Heart left ventricle (tissue), 16 donors: ENCODE measurements at regions of chr2 and their contacts with region 1.

Region 1: DNA sequence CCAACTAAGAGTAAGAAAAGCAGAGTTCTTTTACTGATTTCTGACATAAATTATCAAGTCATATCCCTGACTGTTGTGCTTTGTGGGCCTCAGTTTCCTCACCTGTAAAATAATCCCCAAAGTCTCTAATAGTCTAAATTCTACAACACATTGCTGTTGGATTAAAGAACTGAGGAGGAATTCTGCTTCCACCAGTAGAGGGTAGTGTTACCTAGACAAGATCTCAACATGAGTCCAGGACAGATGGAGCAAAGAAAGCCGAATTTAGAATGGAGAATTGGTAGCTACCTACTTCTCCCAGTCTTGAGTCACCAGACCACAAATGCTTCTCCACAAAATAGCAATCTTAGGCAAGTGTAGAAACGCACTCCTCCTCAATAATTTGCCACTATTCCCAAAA is 462.5 kb upstream of the FSHR start:
- DNase-seq: no peak
- ATAC-seq: peak in 1 of 4 donors; percentile 36
- H3K4me3 ChIP-seq: no peak overlapping the region
- H3K27ac ChIP-seq: no peak overlapping the region
- H3K4me1 ChIP-seq: no peaks in the 10 kb centered on the region
- H3K27me3 ChIP-seq: no peaks in the 10 kb centered on the region
- CTCF ChIP-seq: peak in 10 of 12 donors; percentile 16 to 57 (median 42)
- POLR2A ChIP-seq: no peak

Region 2: DNA sequence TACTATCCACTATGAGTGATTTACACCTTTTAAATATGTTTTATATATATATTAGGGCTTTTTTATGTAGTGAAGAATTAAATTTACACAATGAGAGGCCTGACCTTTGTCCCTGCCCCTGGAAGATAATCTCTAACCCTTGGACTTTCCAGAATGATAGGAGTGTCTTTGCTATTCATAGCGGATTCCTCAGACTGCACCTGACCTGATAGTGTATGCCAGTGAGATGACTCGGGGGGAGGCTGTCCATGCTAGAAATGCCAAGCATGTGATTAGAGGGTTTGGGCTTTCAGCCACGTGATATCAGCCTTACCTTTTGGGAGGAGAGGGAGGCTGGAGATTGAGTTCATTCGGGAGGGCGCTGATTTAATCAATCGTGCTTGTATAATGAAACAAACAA is 817.2 kb before region 1 on chr2:
- intact Hi-C with region 1: no loop called
- DNase-seq: no peak
- ATAC-seq: no peak
- H3K4me3 ChIP-seq: no peak overlapping the region
- H3K27ac ChIP-seq: no peak overlapping the region
- H3K4me1 ChIP-seq: no peaks in the 10 kb centered on the region
- H3K27me3 ChIP-seq: no peaks in the 10 kb centered on the region
- CTCF ChIP-seq: no peak
- POLR2A ChIP-seq: no peak

Region 3: DNA sequence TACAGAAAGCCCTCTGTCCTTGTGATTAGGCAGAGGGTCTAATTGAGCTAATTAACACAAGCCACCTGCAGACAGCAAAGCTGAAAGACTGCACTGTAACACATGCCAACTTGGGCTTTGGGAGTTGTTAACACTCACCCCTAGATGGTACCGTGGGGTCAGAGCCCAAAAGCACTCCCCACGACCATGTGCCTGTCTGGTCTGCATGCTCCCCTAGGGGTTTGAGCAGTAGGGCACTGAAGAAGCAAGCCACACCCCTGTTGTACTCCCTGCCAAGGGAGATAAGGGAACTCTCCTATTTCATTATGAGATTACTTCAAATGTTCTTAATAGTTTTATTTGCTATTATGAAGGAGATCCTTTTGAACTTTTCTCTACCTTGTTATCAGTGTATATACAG is 97.7 kb after region 1 on chr2:
- intact Hi-C with region 1: no loop called
- DNase-seq: no peak
- ATAC-seq: no peak
- H3K4me3 ChIP-seq: no peak overlapping the region
- H3K27ac ChIP-seq: no peak overlapping the region
- H3K4me1 ChIP-seq: no peaks in the 10 kb centered on the region
- H3K27me3 ChIP-seq: no peaks in the 10 kb centered on the region
- CTCF ChIP-seq: no peak
- POLR2A ChIP-seq: no peak

Region 4: GRCh38 chr2:50492477-50492851 is 875.7 kb after region 1 on chr2:
- intact Hi-C with region 1: loop called in 1 of 10 experiments (anchors 5 kb)
- DNase-seq: peak in 3 of 5 donors; percentile 15 to 26 (median 20)
- ATAC-seq: peak in 3 of 4 donors; percentile 72 to 88 (median 76)
- H3K4me3 ChIP-seq: peak overlapping the region in 7 of 12 donors; percentile 3 to 44 (median 20)
- H3K27ac ChIP-seq: no peak overlapping the region
- H3K4me1 ChIP-seq: peaks cover 0 to 13% (median 6%) of the 10 kb centered on the region in 12 donors
- H3K27me3 ChIP-seq: peaks cover 0 to 16% (median 0%) of the 10 kb centered on the region in 9 donors
- CTCF ChIP-seq: peak; percentile 49 to 80 (median 68)
- POLR2A ChIP-seq: no peak